Common myeloid progenitor, CD34-positive (primary cell): ENCODE measurements at regions of chr12 and their contacts with region 1.

Region 1: GRCh38 chr12:51341259-51342007 is 5.0 kb downstream of the CELA1 start:
- DNase-seq: peak; percentile 75 to 87 (median 80)
- H3K4me3 ChIP-seq: peak overlapping the region in 3 of 7 experiments; percentile 35 to 68 (median 37)
- H3K27ac ChIP-seq: no peak overlapping the region
- H3K4me1 ChIP-seq: peaks cover 7 to 19% (median 16%) of the 10 kb centered on the region in 4 experiments
- H3K27me3 ChIP-seq: no peaks in the 10 kb centered on the region

Region 2: GRCh38 chr12:50953045-50953444 is 388.4 kb before region 1 on chr12:
- CTCF ChIA-PET with region 1: no interaction called
- POLR2A ChIA-PET with region 1: no interaction called
- DNase-seq: no peak
- H3K4me3 ChIP-seq: no peak overlapping the region
- H3K27ac ChIP-seq: no peak overlapping the region
- H3K4me1 ChIP-seq: no peaks in the 10 kb centered on the region
- H3K27me3 ChIP-seq: no peaks in the 10 kb centered on the region

Region 3: DNA sequence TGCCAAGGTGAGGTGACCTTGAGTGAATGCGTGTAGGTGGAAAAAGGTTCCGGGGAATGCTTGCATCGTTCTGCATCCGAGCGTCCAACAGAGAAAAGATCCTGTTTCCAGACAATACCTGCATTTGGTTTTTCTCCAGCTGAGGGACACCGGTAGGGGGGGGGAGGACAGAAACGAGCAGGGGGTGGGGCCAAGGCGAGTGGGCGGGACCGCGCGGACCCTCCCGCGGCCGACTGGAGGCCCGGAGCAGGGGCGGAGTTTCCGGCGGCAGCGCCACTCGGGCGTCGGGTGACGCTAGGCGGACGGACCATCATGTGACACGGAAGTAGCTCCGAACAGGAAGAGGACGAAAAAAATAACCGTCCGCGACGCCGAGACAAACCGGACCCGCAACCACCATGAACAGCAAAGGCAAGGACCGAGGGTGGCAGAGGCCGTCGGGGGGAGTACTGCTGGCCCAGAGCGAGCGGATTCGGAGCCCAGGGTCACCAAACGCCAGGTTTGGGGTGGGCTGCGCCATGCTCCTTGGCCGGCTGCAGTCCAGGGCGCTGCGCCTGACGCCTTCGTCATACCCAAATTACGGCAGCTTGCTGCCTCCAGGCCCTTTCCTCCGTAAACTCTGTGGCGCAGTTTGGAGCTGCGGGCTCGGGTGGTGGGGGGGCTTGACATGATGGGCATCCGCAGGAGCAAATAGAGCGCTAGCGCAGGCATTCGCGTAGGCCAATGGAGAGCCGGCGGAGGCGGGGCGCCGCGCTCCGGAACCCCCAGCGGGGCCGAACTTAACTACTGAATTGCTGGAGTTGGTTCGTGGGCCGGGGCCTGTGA is 102.7 kb before region 1 on chr12 and contains the start of gene DAZAP2:
- CTCF ChIA-PET with region 1: interaction called, 10 read pairs
- POLR2A ChIA-PET with region 1: no interaction called
- DNase-seq: peak; percentile 96 to 97 (median 97)
- H3K4me3 ChIP-seq: peak within 1 kb of the TSS; percentile 87 to 99 (median 97)
- H3K27ac ChIP-seq: peak within 1 kb of the TSS; percentile 100
- H3K4me1 ChIP-seq: peaks cover 7 to 38% (median 16%) of the 10 kb centered on the region in 4 experiments
- H3K27me3 ChIP-seq: no peaks in the 10 kb centered on the region

Region 4: DNA sequence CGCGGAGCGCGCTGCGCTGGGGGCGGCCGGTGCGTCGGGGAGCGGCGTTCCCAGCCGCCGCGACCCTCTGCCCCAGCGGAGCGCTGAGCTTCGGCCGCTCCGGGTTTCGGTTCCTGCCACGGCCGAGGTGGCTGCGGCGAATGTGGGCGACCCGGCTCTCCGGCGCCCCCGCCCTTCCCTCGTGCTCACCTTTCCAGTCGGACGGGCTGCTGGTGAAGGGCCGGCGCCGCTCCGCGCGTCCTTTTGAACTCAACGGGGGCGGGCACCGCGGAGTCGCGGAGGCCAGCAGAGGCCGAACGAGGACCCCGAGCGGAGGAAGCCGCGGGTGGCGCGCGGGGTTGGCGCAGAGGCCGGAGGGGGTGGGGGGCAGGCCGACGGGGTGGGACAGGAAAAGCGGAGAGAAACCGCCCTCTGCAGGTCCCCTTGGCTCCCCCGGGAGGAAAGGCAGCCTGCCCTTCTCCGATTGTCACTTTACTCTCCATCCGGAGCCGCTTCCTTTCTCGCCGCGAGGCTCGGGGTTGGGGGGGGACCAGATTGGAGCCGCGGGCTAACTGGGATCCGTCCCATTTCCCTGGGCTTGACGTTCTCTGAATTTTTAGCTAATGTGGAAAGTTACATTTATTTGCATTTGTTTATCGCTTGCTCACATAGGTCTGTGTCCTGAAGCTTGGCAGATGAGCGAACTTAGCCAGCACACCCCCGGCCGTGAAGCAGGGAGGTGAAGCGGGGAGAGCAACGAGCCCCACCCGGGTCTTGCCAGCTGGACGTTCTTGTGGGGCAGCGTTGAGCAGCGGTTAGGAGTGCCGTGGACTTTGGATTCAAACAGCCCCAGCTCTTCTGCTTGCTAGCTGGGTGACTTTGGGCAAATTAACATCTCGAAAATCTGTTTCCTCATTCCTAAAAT is 71.1 kb before region 1 on chr12 and contains the start of gene SMAGP:
- CTCF ChIA-PET with region 1: interaction called, 14 read pairs
- POLR2A ChIA-PET with region 1: no interaction called
- DNase-seq: peak in 2 of 3 donors; percentile 52 to 65
- H3K4me3 ChIP-seq: peak within 1 kb of the TSS; percentile 59 to 85 (median 74)
- H3K27ac ChIP-seq: peak within 1 kb of the TSS in 1 of 2 experiments; percentile 25
- H3K4me1 ChIP-seq: peaks cover 0 to 20% (median 18%) of the 10 kb centered on the region in 4 experiments
- H3K27me3 ChIP-seq: peaks cover 0 to 4% (median 0%) of the 10 kb centered on the region in 5 experiments

Region 5: DNA sequence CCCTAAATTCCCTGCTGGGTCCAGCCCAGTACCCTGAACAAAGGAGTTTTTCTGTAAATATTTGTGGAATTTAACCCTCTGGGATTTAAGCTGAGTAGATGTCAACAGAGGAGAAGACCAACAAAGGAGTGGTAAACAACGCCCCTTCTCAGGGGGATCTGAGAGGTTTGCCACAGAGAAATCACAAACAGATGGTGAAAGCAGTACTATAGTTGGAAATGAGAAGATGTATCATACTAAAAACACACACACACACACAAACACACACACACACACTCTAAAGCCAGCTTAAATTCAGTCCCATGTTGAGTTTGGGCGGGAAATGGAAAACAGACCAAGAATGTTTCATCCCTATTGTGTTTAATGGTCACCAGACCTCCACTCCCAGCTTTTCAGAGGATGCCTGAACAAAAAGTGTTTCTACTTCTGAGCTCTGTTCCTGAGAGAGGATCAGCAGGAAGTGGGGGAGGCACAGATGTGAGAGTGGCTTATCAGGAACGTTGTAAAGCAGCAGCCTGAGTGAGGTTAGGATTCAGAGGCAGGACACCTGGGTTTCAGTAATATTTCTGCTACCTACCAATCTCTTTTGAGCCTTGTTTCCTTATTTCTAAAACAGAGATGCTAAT is 20.6 kb before region 1 on chr12:
- CTCF ChIA-PET with region 1: interaction called, 666 read pairs
- POLR2A ChIA-PET with region 1: interaction called, 10 read pairs
- DNase-seq: peak in 2 of 3 donors; percentile 74 to 76
- H3K4me3 ChIP-seq: peak overlapping the region in 5 of 7 experiments; percentile 26 to 57 (median 47)
- H3K27ac ChIP-seq: peak overlapping the region; percentile 33 to 59
- H3K4me1 ChIP-seq: peaks cover 40 to 78% (median 73%) of the 10 kb centered on the region in 4 experiments
- H3K27me3 ChIP-seq: no peaks in the 10 kb centered on the region

Region 6: DNA sequence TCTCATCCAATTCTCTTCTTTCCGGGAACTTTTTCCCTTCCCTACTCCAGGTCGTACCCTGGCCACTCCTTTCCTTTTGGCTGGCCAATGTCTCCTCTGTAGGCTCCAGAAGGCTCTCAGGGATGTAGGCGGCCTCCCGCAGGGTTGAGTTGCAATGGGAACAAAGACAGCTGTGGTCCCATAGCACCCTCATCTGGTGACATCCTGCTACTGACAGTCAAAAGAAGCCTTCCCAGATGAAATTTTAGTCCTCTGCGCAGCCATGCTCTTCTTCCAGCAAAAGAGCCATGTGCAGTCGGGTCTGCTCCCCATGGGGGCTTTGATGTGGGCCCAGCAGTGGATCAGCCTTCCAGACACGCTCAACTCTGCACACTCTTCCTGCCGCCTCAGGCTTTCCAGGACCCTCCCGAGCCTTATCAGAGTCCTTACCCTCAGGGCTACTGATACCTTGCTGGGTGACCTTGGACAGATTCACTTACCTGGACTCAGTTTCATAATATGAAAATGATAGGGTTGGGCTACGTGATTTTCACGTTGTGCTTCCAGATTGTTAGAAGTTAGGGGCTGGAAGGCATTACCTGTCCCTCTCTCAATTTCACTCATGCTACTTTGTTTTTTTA is 10.6 kb after region 1 on chr12:
- CTCF ChIA-PET with region 1: interaction called, 39 read pairs
- POLR2A ChIA-PET with region 1: no interaction called
- DNase-seq: peak; percentile 50 to 74 (median 64)
- H3K4me3 ChIP-seq: no peak overlapping the region
- H3K27ac ChIP-seq: no peak overlapping the region
- H3K4me1 ChIP-seq: no peaks in the 10 kb centered on the region
- H3K27me3 ChIP-seq: no peaks in the 10 kb centered on the region

Region 7: GRCh38 chr12:51424662-51425438 is 83.4 kb after region 1 on chr12 and contains the start of gene SLC4A8:
- CTCF ChIA-PET with region 1: no interaction called
- POLR2A ChIA-PET with region 1: no interaction called
- DNase-seq: peak; percentile 80 to 91 (median 90)
- H3K4me3 ChIP-seq: peak within 1 kb of the TSS; percentile 44 to 78 (median 57)
- H3K27ac ChIP-seq: no peak within 1 kb of the TSS
- H3K4me1 ChIP-seq: peaks cover 5 to 13% (median 11%) of the 10 kb centered on the region in 4 experiments
- H3K27me3 ChIP-seq: peaks cover 0 to 3% (median 0%) of the 10 kb centered on the region in 5 experiments